Posterior vena cava (tissue), 2 donors: ENCODE measurements at regions of chr1 and their contacts with region 1.

Region 1: DNA sequence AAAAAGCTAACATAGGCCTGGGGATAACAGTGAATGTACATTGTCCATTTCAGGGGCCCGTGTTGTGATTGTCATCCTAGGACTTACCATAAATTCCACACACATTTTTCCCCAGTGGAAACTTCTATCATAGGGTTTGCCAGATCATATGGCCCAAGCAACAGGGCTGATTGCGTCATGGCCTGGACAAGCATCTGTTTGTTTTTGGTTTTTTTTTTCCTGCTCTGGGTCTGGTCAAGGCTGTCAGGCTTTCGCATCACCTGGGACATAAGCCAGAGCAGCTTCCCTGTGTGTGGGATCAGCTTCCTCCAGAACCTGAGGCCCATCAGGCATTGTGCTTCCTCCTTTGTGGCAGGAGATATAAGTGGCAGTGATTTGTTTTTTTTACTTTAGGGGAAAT is 598.5 kb upstream of the USP24 start:
- DNase-seq: no peak

Region 2: DNA sequence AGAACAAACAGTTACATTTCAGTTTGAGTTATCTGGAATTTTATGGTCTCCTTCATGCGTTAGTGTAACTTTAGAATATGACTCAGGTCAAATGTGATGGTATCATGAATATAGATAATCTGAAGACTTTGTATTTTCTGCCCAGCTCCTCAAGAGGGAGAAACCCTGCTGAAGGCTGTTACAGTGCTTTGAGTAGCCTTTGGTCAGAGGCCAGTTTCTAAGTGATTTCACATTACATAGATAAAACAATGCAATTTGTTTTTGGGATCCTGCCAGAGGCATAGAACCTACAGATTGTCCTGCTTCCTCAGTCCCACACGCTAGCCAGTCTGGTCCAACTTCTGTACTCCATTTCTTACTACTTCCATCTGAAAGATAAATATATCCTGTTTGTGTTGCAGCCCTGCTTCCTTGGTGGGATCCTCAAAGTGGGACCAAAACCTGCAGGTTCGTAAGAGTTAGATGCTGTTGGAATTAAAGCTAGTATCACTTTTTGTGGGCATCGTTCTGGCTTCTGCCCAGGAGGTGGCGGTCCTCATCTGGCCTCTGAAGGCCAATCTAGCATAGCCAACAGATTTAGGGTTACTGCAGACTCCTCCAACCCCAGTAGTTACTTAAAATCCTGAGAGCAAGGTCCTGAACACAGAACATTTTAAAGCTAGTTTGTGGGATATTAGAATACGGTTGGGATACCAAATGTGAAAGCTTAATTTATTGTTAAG is 47.3 kb after region 1 on chr1:
- intact Hi-C with region 1: loop called in 1 of 2 experiments (anchors 1 kb)
- DNase-seq: no peak

Region 3: DNA sequence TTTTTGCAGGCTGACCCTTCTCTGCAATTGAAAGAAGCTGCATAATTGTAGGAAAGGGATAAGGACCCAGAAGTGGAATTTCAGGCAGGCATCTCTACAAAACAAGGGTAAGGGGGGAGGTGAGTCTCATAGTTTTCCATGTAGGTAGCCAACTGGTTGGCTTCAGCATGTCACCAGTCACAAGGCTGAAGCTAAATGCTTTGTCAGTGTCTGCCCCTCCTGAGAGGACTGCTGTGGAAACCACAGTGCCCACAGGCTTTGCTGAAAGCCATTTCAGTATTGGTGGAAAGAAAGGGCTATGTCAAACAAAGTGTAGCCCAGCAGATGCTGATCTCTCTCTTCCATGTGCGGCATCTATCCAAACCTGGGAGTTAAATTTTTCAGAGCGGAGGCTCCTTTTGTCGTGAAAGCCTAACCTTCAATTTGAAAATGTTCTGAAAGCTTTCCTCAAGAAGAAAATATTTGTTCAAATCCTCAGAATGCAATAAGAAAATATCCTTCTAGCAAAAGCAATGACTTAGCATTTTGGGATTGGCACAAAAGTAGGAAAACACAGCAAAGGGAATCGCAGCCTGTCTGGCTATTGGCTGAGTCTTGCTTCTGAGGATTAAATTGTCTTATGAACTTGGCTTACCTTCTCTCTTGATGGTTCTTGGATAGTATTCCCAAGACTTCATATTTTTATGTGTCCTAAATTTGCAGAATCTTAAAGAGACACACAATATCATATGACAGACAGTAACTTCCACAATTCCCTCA is 174.1 kb after region 1 on chr1:
- intact Hi-C with region 1: no loop called
- DNase-seq: no peak